Heart right ventricle (tissue), 16 donors: ENCODE measurements at regions of chr1 and their contacts with region 1.

Region 1: DNA sequence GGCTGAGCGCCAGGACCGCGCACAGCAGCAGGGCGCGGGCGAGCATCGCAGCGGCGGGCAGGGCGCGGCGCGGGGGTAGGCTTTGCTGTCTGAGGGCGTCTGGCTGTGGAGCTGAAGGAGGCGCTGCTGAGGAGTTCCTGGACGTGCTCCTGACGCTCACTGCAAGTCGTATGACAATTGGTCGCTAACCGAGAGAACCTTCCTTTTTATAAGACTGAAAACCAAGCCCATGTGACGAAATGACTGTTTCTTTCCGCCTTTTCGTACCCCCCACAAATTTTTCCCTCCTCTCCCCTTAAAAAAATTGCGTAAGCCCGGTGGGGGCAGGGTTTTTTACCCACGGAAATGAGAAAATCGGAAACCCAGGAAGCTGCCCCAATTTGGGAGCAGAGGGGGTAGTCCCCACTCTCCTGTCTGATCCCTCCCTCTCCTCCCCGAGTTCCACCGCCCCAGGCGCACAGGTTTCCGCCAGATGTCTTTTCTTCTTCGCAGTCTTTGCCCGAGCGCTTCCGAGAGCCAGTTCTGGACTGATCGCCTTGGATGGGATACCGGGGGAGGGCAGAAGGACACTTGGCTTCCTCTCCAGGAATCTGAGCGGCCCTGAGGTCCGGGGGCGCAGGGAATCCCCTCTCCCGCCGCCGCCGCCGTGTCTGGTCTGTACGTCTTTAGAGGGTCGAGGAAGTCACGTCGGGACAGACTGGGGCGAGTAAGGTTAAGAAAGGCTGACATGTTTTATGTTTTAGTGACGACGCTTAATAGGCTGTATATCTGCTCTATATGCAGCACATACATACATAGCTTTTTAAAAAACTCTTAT is at the start of gene PTGS2:
- DNase-seq: peak; percentile 63 to 73
- ATAC-seq: peak; percentile 91 to 97 (median 94)
- H3K4me3 ChIP-seq: peak within 1 kb of the TSS; percentile 41 to 67 (median 59)
- H3K27ac ChIP-seq: peak within 1 kb of the TSS; percentile 18 to 86 (median 80)
- H3K4me1 ChIP-seq: peaks cover 0 to 15% (median 0%) of the 10 kb centered on the region in 9 donors
- H3K27me3 ChIP-seq: peaks cover 0 to 21% (median 10%) of the 10 kb centered on the region in 7 donors
- CTCF ChIP-seq: peak in 6 of 9 donors; percentile 20 to 55 (median 46)
- total RNA-seq, gene PTGS2: 0.30 to 7.1 (median 1.8) TPM

Region 2: GRCh38 chr1:186482661-186483255 is 197.7 kb before region 1 on chr1:
- intact Hi-C with region 1: loop called in 1 of 10 experiments (anchors 10 kb)
- DNase-seq: peak; percentile 25 to 30
- ATAC-seq: peak in 5 of 8 donors; percentile 33 to 68 (median 52)
- H3K4me3 ChIP-seq: no peak overlapping the region
- H3K27ac ChIP-seq: no peak overlapping the region
- H3K4me1 ChIP-seq: peaks cover 0 to 6% (median 0%) of the 10 kb centered on the region in 9 donors
- H3K27me3 ChIP-seq: no peaks in the 10 kb centered on the region
- CTCF ChIP-seq: peak; percentile 60 to 91 (median 82)